ENCODE measurements at regions of chr19 and their contacts with region 1.

Region 1: GRCh38 chr19:46661020-46661731 is at the start of gene DACT3:
- DNase-seq: peak; percentile 97
- H3K4me3 ChIP-seq: peak within 1 kb of the TSS; percentile 69
- CTCF ChIP-seq: no peak

Region 2: DNA sequence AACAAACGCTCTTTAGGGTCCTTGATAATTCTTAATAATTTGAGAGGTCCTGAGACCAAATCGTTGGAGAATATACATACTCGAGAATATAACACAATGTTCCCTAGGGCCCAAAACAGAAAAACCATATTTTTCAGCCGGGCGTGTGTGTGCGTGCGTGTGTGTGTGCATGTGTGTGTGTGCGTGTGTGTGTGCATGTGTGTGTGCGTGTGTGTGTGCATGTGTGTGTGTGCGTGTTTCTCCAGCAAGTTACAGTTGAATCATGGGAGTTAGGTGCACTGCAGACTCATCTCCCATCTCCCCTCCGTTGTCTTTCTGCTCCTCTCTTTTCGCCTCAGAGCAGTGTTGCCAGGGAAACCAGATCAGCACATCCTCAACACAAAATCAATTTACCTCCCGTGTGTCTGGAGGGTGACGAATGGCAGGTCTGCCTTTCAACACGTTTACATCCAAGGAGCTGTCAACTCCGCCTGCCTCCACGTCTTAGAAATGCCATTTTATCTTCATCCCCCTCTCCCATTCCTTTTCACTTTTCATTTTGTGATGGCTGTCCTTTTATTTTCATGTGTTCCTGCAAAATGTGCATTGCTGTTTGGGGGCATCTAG is 157.2 kb before region 1 on chr19:
- CTCF ChIA-PET with region 1: no interaction called
- POLR2A ChIA-PET with region 1: no interaction called
- DNase-seq: no peak
- H3K4me3 ChIP-seq: no peak overlapping the region
- CTCF ChIP-seq: no peak

Region 3: DNA sequence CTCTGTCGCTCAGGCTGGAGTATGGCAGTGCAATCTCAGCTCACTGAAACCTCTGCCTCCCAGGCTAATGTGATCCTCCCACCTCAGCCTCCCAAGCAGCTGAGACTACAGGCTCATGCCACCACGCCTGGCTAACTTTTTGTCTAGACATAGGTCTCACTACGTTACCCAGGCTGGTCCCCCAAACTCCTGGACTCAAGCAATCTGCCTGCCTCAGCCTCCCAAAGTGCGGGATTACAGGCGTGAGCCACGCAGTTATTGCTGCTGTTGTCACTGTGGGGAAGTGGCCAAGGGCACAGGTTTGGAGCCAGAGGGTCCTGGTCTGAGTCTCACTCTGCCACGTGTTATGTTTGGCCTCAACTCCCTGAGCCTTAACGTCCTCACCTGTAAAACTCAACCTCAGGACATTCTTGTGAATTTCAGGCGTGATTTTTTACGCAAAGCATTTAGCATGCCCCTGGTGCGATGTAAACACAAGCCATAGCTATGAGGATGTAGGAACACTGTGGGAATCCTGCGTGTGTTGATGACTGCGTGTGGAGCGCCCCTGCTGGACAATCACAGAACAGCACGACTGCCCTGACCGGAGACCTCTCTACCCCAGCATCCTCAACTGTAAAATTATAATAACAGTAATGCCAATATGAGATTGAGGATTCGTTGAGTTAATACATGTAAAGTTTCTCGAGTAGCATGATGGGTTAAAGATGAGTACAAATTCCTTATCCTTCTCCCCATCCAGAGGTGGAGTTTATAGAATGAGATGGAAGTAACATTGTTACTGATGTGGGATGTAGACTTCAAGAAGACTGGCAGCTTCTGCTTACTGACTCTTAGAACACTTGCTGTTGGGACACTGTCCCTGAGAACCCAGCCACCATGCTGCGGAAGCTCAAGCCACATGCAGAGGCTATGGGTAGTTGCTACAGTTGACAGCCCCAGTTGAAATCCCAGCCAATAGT is 123.8 kb before region 1 on chr19:
- CTCF ChIA-PET with region 1: interaction called, 17 read pairs
- POLR2A ChIA-PET with region 1: no interaction called
- DNase-seq: no peak
- H3K4me3 ChIP-seq: no peak overlapping the region
- CTCF ChIP-seq: peak; percentile 86

Region 4: GRCh38 chr19:46600384-46601317 is 60.5 kb before region 1 on chr19:
- CTCF ChIA-PET with region 1: interaction called, 685 read pairs
- POLR2A ChIA-PET with region 1: interaction called, 15 read pairs
- DNase-seq: peak; percentile 84
- H3K4me3 ChIP-seq: peak overlapping the region; percentile 89
- CTCF ChIP-seq: no peak

Region 5: DNA sequence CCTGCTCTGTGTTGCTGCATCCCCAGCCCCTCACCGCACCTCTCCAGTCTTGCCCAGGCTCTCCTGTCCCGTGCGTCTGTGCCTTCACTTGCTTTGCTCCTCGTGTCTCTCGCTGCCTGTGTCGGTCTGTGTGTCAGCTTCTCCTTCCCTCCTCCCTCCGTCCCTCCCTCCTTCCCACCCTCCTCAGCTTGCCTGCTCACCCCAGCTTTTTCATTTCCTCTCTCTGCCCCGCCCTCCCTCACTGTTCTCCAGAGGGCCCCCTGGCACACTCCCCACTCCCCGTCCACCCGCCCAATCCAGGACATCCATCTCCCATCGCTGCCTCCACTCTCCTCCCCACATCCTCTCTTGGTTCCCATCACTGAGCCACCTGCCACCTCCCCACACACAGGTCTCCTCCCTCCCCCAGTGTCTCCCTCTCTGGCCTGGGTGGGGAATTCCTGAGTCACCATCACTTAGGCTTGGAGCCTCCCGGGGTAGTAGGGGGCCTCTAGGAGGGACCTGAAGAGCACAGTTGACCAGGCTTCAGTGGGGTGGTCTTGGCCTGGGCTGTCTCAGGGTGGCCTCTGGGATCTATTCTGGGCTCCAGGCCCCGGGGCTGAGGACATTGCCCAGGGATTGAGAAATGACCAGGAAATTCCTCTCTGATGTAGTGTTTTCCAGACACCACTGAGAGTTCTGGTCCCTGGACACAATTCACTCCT is 36.1 kb before region 1 on chr19 and contains the start of gene PTGIR:
- CTCF ChIA-PET with region 1: interaction called, 685 read pairs
- POLR2A ChIA-PET with region 1: no interaction called
- DNase-seq: no peak
- H3K4me3 ChIP-seq: peak within 1 kb of the TSS; percentile 50
- CTCF ChIP-seq: no peak

Region 6: GRCh38 chr19:46644720-46645119 is 16.5 kb before region 1 on chr19:
- CTCF ChIA-PET with region 1: interaction called, 38 read pairs
- POLR2A ChIA-PET with region 1: no interaction called
- DNase-seq: no peak
- H3K4me3 ChIP-seq: no peak overlapping the region
- CTCF ChIP-seq: no peak

Region 7: GRCh38 chr19:46788262-46788967 is 127.2 kb after region 1 on chr19 and contains the start of gene SLC1A5:
- CTCF ChIA-PET with region 1: no interaction called
- POLR2A ChIA-PET with region 1: no interaction called
- DNase-seq: peak; percentile 79
- H3K4me3 ChIP-seq: peak within 1 kb of the TSS; percentile 95
- CTCF ChIP-seq: no peak

Region 8: DNA sequence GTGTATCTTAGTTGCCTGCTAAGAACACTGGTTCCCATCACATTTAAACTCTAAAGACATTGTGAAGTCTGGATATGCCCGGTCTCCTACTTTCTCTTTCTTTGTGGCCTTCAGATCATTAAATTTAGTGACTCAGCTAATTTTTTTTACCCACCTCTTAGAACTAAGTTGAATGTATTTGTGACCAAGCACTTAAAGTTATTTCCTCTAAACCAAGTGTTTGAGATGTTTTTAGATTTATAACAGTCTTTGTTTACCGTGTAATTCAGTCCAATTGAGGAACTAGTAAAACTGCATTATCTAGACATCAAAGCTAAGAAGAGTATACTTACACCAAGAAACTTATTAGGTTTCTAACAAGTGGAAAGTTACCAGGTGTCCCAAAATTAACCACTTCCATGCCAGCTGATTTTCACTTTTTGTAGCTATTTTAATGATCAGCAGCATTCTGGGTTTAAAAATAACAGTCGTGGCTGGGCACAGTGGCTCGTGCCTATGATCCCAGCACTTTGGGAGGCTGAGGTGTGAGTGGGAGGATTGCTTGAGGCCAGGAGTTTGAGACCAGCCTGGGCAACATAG is 252.8 kb after region 1 on chr19:
- CTCF ChIA-PET with region 1: no interaction called
- POLR2A ChIA-PET with region 1: no interaction called
- DNase-seq: no peak
- H3K4me3 ChIP-seq: no peak overlapping the region
- CTCF ChIP-seq: no peak

Measured in AG04449 (cell line).